ENCODE measurements at regions of chr14 and their contacts with region 1.

Region 1: GRCh38 chr14:93121030-93121834 is 5.5 kb upstream of the ITPK1 start:
- DNase-seq: no peak
- H3K4me3 ChIP-seq: no peak overlapping the region
- H3K27ac ChIP-seq: no peak overlapping the region
- H3K27me3 ChIP-seq: no peaks in the 10 kb centered on the region
- CTCF ChIP-seq: no peak

Region 2: GRCh38 chr14:93132470-93133065 is 11.3 kb after region 1 on chr14:
- intact Hi-C with region 1: loop called (anchors 1 to 2 kb)
- DNase-seq: peak in 4 of 10 donors; percentile 21 to 47 (median 36)
- H3K4me3 ChIP-seq: no peak overlapping the region
- H3K27ac ChIP-seq: no peak overlapping the region
- H3K27me3 ChIP-seq: no peaks in the 10 kb centered on the region
- CTCF ChIP-seq: peak in 53 of 56 donors; percentile 14 to 71 (median 51)